ENCODE measurements at regions of chr2 and their contacts with region 1.

Region 1: DNA sequence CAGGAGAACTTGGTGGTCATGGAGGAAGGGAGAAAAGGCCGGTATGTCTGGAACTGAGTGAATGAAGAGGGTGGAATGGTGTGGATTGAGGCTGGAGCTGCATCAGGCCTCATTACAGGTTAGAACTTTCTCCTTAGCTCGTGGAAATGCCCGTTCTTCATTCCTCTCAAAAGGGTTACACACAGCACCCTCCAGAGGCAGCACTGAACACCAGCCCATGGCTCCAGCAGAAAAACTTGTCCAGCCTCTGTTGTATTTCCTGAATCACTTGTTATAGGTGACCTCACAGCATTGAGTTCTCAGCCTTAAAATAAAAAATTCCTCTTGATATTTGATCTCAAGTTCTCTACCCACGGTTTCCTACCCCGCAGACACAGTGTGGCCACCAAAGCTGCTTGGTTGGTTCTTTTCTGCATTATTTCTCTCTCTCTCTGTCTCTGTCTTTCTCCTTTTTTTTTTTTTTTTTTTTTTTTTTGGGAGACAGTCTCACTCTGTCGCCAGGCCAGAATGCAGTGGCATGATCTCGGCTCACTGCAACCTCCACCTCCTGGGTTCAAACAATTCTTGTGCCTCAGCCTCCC is 89.6 kb downstream of the ITGB1BP1 start:
- DNase-seq: peak; percentile 57 to 77 (median 67)
- ATAC-seq: peak; percentile 58 to 74 (median 68)
- H3K4me3 ChIP-seq: no peak overlapping the region
- H3K27ac ChIP-seq: peak overlapping the region in 2 of 3 donors; percentile 43 to 44
- H3K4me1 ChIP-seq: peaks cover 0 to 35% (median 11%) of the 10 kb centered on the region in 4 donors
- H3K27me3 ChIP-seq: no peaks in the 10 kb centered on the region
- CTCF ChIP-seq: peak; percentile 64 to 78 (median 71)
- POLR2A ChIP-seq: no peak

Region 2: DNA sequence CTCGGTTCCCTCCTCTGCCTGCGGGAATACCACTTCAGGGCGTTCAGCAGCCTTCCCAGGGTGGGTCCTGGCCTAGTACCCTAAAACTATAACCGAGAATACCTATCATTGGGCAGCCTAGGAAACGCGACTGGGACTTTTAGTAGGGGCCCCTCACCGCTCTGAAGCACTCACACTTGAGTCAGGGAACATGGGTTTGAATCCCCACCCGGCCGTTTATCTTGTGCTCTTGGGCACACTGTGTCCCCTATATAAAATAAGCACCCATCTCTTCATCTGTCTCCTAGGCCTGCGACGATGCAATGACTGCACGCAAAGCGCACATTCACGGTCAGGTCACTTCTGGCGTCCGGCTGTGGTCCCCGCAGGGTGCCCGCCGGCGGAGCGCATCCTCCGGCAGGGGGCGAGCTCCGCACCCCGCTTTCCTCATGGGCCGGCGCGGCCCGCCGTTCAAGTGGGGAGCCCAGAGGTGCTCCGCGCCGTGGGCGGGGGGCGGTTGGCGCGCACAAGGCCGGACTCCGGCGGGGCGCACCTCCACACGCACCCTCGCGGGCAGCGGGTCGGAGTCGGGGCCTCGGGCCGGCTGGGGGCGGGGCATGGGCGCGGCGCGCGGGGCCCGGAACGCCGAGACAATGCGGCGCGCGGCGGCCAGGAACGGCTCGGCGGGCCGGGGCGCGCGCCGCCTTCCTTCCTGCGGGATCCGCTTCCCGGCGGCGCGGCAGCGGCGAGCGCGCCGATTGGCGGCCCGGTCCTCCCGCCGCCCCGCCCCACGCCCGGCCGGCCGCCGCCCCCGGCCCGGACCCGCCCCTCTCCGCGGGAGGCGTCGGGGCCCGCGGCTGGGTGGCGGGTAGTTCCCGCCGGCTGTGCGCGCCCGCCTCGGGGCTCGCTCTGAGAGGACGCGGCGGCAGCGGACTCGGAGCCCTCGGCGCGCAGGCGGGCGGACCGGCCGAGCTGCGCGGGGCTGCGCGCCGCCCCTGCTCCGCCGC is 127.4 kb before region 1 on chr2 and contains the start of gene ASAP2:
- intact Hi-C with region 1: loop called in 1 of 2 experiments (anchors 10 kb)
- DNase-seq: peak; percentile 71 to 75 (median 75)
- ATAC-seq: peak; percentile 81 to 91 (median 84)
- H3K4me3 ChIP-seq: peak within 1 kb of the TSS; percentile 56 to 66 (median 57)
- H3K27ac ChIP-seq: peak within 1 kb of the TSS; percentile 43 to 69 (median 50)
- H3K4me1 ChIP-seq: peaks cover 0 to 14% (median 3%) of the 10 kb centered on the region in 4 donors
- H3K27me3 ChIP-seq: no peaks in the 10 kb centered on the region
- CTCF ChIP-seq: peak; percentile 72 to 75 (median 73)
- POLR2A ChIP-seq: peak; percentile 38
- total RNA-seq, gene ASAP2: 2.4 to 5.2 (median 3.9) TPM

Region 3: GRCh38 chr2:9474361-9474967 is 140.8 kb after region 1 on chr2 and contains the start of gene IAH1:
- intact Hi-C with region 1: no loop called
- DNase-seq: peak; percentile 75 to 78 (median 78)
- ATAC-seq: peak; percentile 83 to 90 (median 86)
- H3K4me3 ChIP-seq: peak within 1 kb of the TSS; percentile 57 to 83 (median 78)
- H3K27ac ChIP-seq: peak within 1 kb of the TSS; percentile 58 to 82 (median 81)
- H3K4me1 ChIP-seq: peaks cover 0 to 11% (median 6%) of the 10 kb centered on the region in 4 donors
- H3K27me3 ChIP-seq: no peaks in the 10 kb centered on the region
- CTCF ChIP-seq: no peak
- POLR2A ChIP-seq: peak; percentile 65
- total RNA-seq, gene IAH1: 30.4 to 41.3 (median 33.6) TPM